ENCODE measurements at regions of chr3 and their contacts with region 1.

Region 1: DNA sequence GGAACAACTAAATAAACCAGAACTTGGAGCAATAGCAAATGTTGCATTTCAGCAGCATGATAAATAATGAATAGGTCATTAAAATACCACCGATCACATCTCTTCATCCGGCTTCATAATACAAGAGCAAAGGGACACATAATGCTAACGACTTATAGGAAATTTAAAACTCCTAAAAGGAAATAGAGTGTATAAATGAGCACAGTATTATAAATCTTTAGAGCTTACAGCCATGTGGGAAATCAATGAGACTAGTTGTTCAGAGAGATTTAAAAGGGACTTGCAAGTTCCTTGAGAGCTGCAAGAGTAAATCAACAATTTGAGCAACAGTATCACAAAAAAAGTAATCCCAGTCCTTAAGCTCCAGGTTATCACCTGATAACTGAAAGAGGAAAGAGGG is 677.0 kb downstream of the PLOD2 start:
- DNase-seq: no peak
- ATAC-seq: no peak
- H3K4me3 ChIP-seq: no peak overlapping the region
- H3K4me3 Mint-ChIP-seq: no peak overlapping the region
- H3K27ac ChIP-seq: no peak overlapping the region
- H3K27ac Mint-ChIP-seq: no peak overlapping the region
- H3K4me1 ChIP-seq: no peaks in the 10 kb centered on the region
- H3K4me1 Mint-ChIP-seq: no peaks in the 10 kb centered on the region
- H3K27me3 ChIP-seq: no peaks in the 10 kb centered on the region
- H3K27me3 Mint-ChIP-seq: no peaks in the 10 kb centered on the region

Region 2: DNA sequence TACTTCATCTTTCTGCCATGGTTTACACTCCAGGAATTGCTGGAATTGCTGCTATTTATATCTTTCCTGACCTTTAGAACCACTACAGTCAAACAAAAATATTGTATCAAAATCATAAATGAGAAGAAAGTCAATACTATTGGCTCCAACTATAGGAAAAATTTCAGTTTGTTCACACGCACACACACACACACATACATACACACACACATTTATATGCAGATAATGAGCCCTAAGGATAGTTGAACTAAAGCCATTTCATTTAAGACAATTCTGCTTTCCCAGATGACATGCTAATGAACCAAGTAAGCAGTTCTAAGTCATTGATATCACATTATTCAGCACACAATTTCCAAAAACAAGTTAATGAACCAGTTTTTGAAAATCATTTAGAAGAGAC is 49.7 kb after region 1 on chr3:
- CTCF ChIA-PET with region 1: no interaction called
- POLR2A ChIA-PET with region 1: no interaction called
- DNase-seq: no peak
- ATAC-seq: no peak
- H3K4me3 ChIP-seq: no peak overlapping the region
- H3K4me3 Mint-ChIP-seq: no peak overlapping the region
- H3K27ac ChIP-seq: no peak overlapping the region
- H3K27ac Mint-ChIP-seq: no peak overlapping the region
- H3K4me1 ChIP-seq: no peaks in the 10 kb centered on the region
- H3K4me1 Mint-ChIP-seq: no peaks in the 10 kb centered on the region
- H3K27me3 ChIP-seq: no peaks in the 10 kb centered on the region
- H3K27me3 Mint-ChIP-seq: no peaks in the 10 kb centered on the region

Region 3: DNA sequence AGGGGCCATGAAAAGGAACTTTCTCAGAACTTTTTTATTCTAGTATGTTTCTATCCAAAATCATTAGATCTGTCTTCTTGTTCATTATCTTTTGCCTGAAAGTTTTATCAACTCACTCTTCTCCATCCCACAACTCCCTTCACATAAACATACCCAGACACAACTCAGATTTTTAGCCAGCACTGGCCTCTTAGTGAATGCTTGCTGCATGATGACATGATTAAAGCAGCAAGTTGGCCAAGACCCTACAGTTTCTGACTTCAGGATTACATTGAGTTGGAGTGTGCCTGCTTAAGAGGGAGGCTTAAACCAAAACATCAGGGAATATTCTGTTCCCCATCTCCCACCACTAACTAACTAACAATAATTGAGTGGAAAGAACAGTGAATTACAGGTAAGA is 947.2 kb after region 1 on chr3:
- CTCF ChIA-PET with region 1: no interaction called
- POLR2A ChIA-PET with region 1: interaction called in 1 of 2 experiments, 15 read pairs
- DNase-seq: no peak
- ATAC-seq: no peak
- H3K4me3 ChIP-seq: no peak overlapping the region
- H3K4me3 Mint-ChIP-seq: no peak overlapping the region
- H3K27ac ChIP-seq: no peak overlapping the region
- H3K27ac Mint-ChIP-seq: no peak overlapping the region
- H3K4me1 ChIP-seq: no peaks in the 10 kb centered on the region
- H3K4me1 Mint-ChIP-seq: no peaks in the 10 kb centered on the region
- H3K27me3 ChIP-seq: no peaks in the 10 kb centered on the region
- H3K27me3 Mint-ChIP-seq: no peaks in the 10 kb centered on the region